PC-9 (cell line): ENCODE measurements at regions of chr4 and their contacts with region 1.

Region 1: GRCh38 chr4:5710961-5711478 is at the start of gene EVC:
- DNase-seq: peak in 1 of 2 experiments; percentile 66
- H3K4me3 ChIP-seq: peak within 1 kb of the TSS; percentile 53; the same call in 1 of the 2 replicates
- H3K27ac ChIP-seq: no peak within 1 kb of the TSS
- H3K4me1 ChIP-seq: 0 out of 2 replicates have a peak, but pooled peaks cover 3% of the 10 kb centered on the region
- H3K27me3 ChIP-seq: no peaks in the 10 kb centered on the region
- CTCF ChIP-seq: no peak
- total RNA-seq, gene EVC: 14.0 and 15.5 TPM in 2 replicates

Region 2: GRCh38 chr4:5477613-5478012 is 233.4 kb before region 1 on chr4:
- CTCF ChIA-PET with region 1: no interaction called
- POLR2A ChIA-PET with region 1: no interaction called
- intact Hi-C with region 1: no loop called
- DNase-seq: no peak
- H3K4me3 ChIP-seq: no peak overlapping the region
- H3K27ac ChIP-seq: no peak overlapping the region
- H3K4me1 ChIP-seq: no peaks in the 10 kb centered on the region
- H3K27me3 ChIP-seq: no peaks in the 10 kb centered on the region; the same call in 1 of the 2 replicates
- CTCF ChIP-seq: no peak

Region 3: GRCh38 chr4:5747738-5748365 is 36.8 kb after region 1 on chr4:
- CTCF ChIA-PET with region 1: no interaction called
- POLR2A ChIA-PET with region 1: no interaction called
- intact Hi-C with region 1: loop called (anchors 5 kb)
- DNase-seq: peak in 1 of 2 experiments; percentile 37
- H3K4me3 ChIP-seq: no peak overlapping the region
- H3K27ac ChIP-seq: no peak overlapping the region
- H3K4me1 ChIP-seq: no peaks in the 10 kb centered on the region
- H3K27me3 ChIP-seq: no peaks in the 10 kb centered on the region
- CTCF ChIP-seq: no peak